B cell (primary cell): ENCODE measurements at regions of chr1 and their contacts with region 1.

Region 1: GRCh38 chr1:157580179-157580827 is 17.6 kb downstream of the FCRL4 start:
- DNase-seq: peak; percentile 83
- ATAC-seq: peak; percentile 44
- H3K4me3 ChIP-seq: no peak overlapping the region
- H3K4me3 Mint-ChIP-seq: no peak overlapping the region
- H3K27ac ChIP-seq: no peak overlapping the region
- H3K27ac Mint-ChIP-seq: no peak overlapping the region
- H3K4me1 ChIP-seq: peaks cover 61 to 62% of the 10 kb centered on the region in 2 donors
- H3K4me1 Mint-ChIP-seq: peaks cover 70% of the 10 kb centered on the region
- H3K27me3 ChIP-seq: no peaks in the 10 kb centered on the region
- H3K27me3 Mint-ChIP-seq: no peaks in the 10 kb centered on the region
- CTCF ChIP-seq: peak; percentile 94

Region 2: GRCh38 chr1:157487096-157487495 is 93.2 kb before region 1 on chr1:
- CTCF ChIA-PET with region 1: no interaction called
- POLR2A ChIA-PET with region 1: no interaction called
- intact Hi-C with region 1: no loop called
- DNase-seq: no peak
- ATAC-seq: no peak
- H3K4me3 ChIP-seq: no peak overlapping the region
- H3K4me3 Mint-ChIP-seq: no peak overlapping the region
- H3K27ac ChIP-seq: no peak overlapping the region
- H3K27ac Mint-ChIP-seq: no peak overlapping the region
- H3K4me1 ChIP-seq: peaks cover 0 to 5% of the 10 kb centered on the region in 2 donors
- H3K4me1 Mint-ChIP-seq: peaks cover 2% of the 10 kb centered on the region
- H3K27me3 ChIP-seq: no peaks in the 10 kb centered on the region
- H3K27me3 Mint-ChIP-seq: no peaks in the 10 kb centered on the region
- CTCF ChIP-seq: no peak

Region 3: GRCh38 chr1:157505481-157506272 is 74.6 kb before region 1 on chr1:
- CTCF ChIA-PET with region 1: interaction called, 12 read pairs
- POLR2A ChIA-PET with region 1: no interaction called
- intact Hi-C with region 1: no loop called
- DNase-seq: peak; percentile 77
- ATAC-seq: peak; percentile 96
- H3K4me3 ChIP-seq: peak overlapping the region in 1 of 5 experiments; percentile 18
- H3K4me3 Mint-ChIP-seq: peak overlapping the region; percentile 73
- H3K27ac ChIP-seq: no peak overlapping the region
- H3K27ac Mint-ChIP-seq: peak overlapping the region; percentile 32
- H3K4me1 ChIP-seq: peaks cover 20 to 30% of the 10 kb centered on the region in 2 donors
- H3K4me1 Mint-ChIP-seq: peaks cover 39% of the 10 kb centered on the region
- H3K27me3 ChIP-seq: no peaks in the 10 kb centered on the region
- H3K27me3 Mint-ChIP-seq: no peaks in the 10 kb centered on the region
- CTCF ChIP-seq: peak; percentile 86

Region 4: GRCh38 chr1:157626099-157626498 is 45.8 kb after region 1 on chr1:
- CTCF ChIA-PET with region 1: interaction called, 59 read pairs
- POLR2A ChIA-PET with region 1: no interaction called
- intact Hi-C with region 1: loop called (anchors 1 kb)
- DNase-seq: peak; percentile 72
- ATAC-seq: peak; percentile 49
- H3K4me3 ChIP-seq: no peak overlapping the region
- H3K4me3 Mint-ChIP-seq: no peak overlapping the region
- H3K27ac ChIP-seq: no peak overlapping the region
- H3K27ac Mint-ChIP-seq: no peak overlapping the region
- H3K4me1 ChIP-seq: peaks cover 4 to 6% of the 10 kb centered on the region in 2 donors
- H3K4me1 Mint-ChIP-seq: peaks cover 13% of the 10 kb centered on the region
- H3K27me3 ChIP-seq: no peaks in the 10 kb centered on the region
- H3K27me3 Mint-ChIP-seq: no peaks in the 10 kb centered on the region
- CTCF ChIP-seq: peak; percentile 75

Region 5: DNA sequence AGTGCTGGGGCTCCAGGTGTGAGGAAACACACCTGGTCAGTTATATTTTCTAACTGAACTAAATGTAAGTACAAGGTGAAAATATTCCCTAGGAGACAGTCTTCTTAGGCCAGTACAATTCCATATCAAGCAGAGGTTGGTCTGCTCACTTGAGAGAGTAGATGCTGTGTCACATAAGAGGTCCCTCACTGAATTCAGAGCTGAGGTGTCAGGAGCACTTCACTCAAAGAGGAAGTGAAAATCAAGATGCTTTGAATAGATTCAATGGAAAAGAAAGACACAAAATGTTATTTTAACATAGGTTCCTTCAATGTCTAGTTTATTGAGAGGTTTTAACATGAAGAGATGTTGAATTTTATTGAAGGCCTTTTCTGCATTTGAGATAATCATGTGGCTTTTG is 124.6 kb after region 1 on chr1:
- CTCF ChIA-PET with region 1: interaction called, 11 read pairs
- POLR2A ChIA-PET with region 1: no interaction called
- intact Hi-C with region 1: loop called (anchors 5 kb)
- DNase-seq: peak; percentile 72
- ATAC-seq: peak; percentile 80
- H3K4me3 ChIP-seq: no peak overlapping the region
- H3K4me3 Mint-ChIP-seq: peak overlapping the region; percentile 68
- H3K27ac ChIP-seq: peak overlapping the region; percentile 24 to 76
- H3K27ac Mint-ChIP-seq: peak overlapping the region; percentile 90
- H3K4me1 ChIP-seq: peaks cover 84 to 87% of the 10 kb centered on the region in 2 donors
- H3K4me1 Mint-ChIP-seq: peaks cover 94% of the 10 kb centered on the region
- H3K27me3 ChIP-seq: no peaks in the 10 kb centered on the region
- H3K27me3 Mint-ChIP-seq: no peaks in the 10 kb centered on the region
- CTCF ChIP-seq: no peak

Region 6: GRCh38 chr1:157773493-157774350 is 193.4 kb after region 1 on chr1:
- CTCF ChIA-PET with region 1: interaction called, 162 read pairs
- POLR2A ChIA-PET with region 1: interaction called, 5 read pairs
- intact Hi-C with region 1: loop called (anchors 1 kb)
- DNase-seq: peak; percentile 78
- ATAC-seq: peak; percentile 86
- H3K4me3 ChIP-seq: peak overlapping the region in 4 of 5 experiments; percentile 36 to 57 (median 39)
- H3K4me3 Mint-ChIP-seq: peak overlapping the region; percentile 54
- H3K27ac ChIP-seq: peak overlapping the region; percentile 50 to 62
- H3K27ac Mint-ChIP-seq: peak overlapping the region; percentile 57
- H3K4me1 ChIP-seq: peaks cover 78% of the 10 kb centered on the region in 2 donors
- H3K4me1 Mint-ChIP-seq: peaks cover 80% of the 10 kb centered on the region
- H3K27me3 ChIP-seq: no peaks in the 10 kb centered on the region
- H3K27me3 Mint-ChIP-seq: no peaks in the 10 kb centered on the region
- CTCF ChIP-seq: peak; percentile 75

Region 7: DNA sequence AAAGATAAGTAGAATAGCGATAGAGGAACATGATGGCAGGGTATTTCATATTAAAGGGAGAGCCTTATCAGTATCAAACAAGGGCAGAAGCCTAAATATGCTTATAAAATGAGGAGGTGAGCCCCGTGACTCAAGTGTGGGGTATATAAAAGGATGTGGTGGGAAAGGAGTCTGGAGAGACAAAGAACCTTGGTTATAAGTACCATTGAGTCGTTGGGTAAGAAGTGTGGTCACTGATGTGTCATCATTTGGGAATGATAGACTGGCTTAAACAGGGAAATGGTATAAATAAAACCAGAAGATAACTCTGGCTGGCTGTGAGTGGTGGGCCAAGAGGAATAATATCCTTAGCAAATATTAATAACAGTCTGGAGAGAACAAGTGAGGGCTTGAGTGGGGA is 272.2 kb after region 1 on chr1:
- CTCF ChIA-PET with region 1: interaction called, 23 read pairs
- POLR2A ChIA-PET with region 1: no interaction called
- intact Hi-C with region 1: no loop called
- DNase-seq: no peak
- ATAC-seq: no peak
- H3K4me3 ChIP-seq: no peak overlapping the region
- H3K4me3 Mint-ChIP-seq: no peak overlapping the region
- H3K27ac ChIP-seq: no peak overlapping the region
- H3K27ac Mint-ChIP-seq: no peak overlapping the region
- H3K4me1 ChIP-seq: peaks cover 32 to 40% of the 10 kb centered on the region in 2 donors
- H3K4me1 Mint-ChIP-seq: peaks cover 62% of the 10 kb centered on the region
- H3K27me3 ChIP-seq: no peaks in the 10 kb centered on the region
- H3K27me3 Mint-ChIP-seq: no peaks in the 10 kb centered on the region
- CTCF ChIP-seq: no peak

Region 8: DNA sequence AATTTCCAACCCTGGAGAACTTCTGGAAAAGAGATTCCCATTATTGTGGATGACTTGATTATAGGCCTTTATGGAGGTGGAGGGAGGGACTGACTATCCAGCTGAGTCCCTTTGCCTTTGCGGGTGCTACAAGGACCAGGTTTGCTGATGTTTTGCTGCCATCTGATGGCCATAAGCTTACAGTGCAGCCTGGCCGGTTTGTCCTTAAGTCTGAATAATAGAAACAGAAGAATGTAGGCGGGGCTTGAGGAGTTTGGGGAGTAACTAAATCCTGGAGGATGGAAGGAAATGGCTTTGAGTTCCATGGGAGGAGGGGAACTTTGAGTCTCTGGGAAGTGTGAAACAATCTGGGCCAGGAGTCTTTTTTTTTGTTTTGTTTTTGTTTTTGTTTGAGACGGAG is 544.7 kb after region 1 on chr1:
- CTCF ChIA-PET with region 1: interaction called, 10 read pairs
- POLR2A ChIA-PET with region 1: no interaction called
- intact Hi-C with region 1: no loop called
- DNase-seq: peak; percentile 86
- ATAC-seq: peak; percentile 89
- H3K4me3 ChIP-seq: no peak overlapping the region
- H3K4me3 Mint-ChIP-seq: no peak overlapping the region
- H3K27ac ChIP-seq: no peak overlapping the region
- H3K27ac Mint-ChIP-seq: peak overlapping the region; percentile 5
- H3K4me1 ChIP-seq: peaks cover 0 to 5% of the 10 kb centered on the region in 2 donors
- H3K4me1 Mint-ChIP-seq: peaks cover 3% of the 10 kb centered on the region
- H3K27me3 ChIP-seq: peaks cover 0 to 18% (median 9%) of the 10 kb centered on the region in 4 experiments
- H3K27me3 Mint-ChIP-seq: peaks cover 25% of the 10 kb centered on the region
- CTCF ChIP-seq: peak; percentile 86

Region 9: DNA sequence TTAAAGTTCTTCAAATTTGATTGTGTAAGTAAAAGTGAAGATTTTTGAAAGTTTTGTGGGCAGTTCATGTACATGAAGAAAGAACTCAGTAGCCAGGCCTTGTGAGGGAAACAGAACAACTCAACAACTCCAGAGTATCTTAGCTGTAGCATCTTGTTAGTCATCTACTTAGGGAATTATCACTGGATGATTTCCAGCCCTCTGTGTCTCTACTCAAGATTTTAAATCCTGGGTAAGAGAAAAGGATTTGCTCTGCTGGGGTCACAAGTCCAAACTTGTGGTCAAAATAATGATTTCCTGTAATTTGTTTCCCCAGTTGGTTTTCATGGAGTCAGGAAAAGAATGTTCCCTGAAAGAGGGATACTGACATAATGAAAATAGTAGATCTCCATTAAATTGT is 810.8 kb after region 1 on chr1:
- CTCF ChIA-PET with region 1: no interaction called
- POLR2A ChIA-PET with region 1: no interaction called
- intact Hi-C with region 1: no loop called
- DNase-seq: no peak
- ATAC-seq: no peak
- H3K4me3 ChIP-seq: no peak overlapping the region
- H3K4me3 Mint-ChIP-seq: no peak overlapping the region
- H3K27ac ChIP-seq: peak overlapping the region in 1 of 2 donors; percentile 2
- H3K27ac Mint-ChIP-seq: no peak overlapping the region
- H3K4me1 ChIP-seq: peaks cover 3 to 16% of the 10 kb centered on the region in 2 donors
- H3K4me1 Mint-ChIP-seq: peaks cover 20% of the 10 kb centered on the region
- H3K27me3 ChIP-seq: no peaks in the 10 kb centered on the region
- H3K27me3 Mint-ChIP-seq: no peaks in the 10 kb centered on the region
- CTCF ChIP-seq: no peak